Activated naive CD4-positive, alpha-beta T cell treated with anti-CD3 and anti-CD28 coated beads, Interleukin-2, amount 10 ng/mL, durations not matched to agents 7 days and 5 days (primary cell): ENCODE measurements at regions of chr7 and their contacts with region 1.

Region 1: GRCh38 chr7:20598459-20599309 is 16.8 kb upstream of the ABCB5 start:
- DNase-seq: no peak
- H3K4me3 Mint-ChIP-seq: no peak overlapping the region
- H3K27ac Mint-ChIP-seq: no peak overlapping the region
- H3K4me1 Mint-ChIP-seq: no peaks in the 10 kb centered on the region
- H3K27me3 Mint-ChIP-seq: peaks cover 4% of the 10 kb centered on the region

Region 2: DNA sequence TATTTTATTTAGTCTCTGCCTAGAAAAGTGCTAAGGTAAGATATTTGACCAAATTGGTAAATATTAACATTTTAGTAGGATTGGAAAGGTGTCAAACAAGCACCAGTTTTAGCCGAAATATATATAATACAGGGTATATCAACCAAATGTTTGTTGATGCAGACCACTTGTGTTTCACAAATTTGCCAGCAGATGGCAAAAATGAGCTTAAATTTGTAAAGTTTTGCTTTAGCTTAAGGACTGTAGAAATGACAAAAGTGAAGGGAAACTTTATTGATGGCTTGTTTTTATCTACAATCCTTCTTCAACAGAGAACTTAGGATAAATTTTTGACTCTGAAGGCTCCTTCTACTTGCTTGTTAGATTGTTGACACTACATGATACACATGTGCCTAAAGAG is 885.0 kb before region 1 on chr7:
- CTCF ChIA-PET with region 1: interaction called, 28 read pairs
- DNase-seq: peak; percentile 61
- H3K4me3 Mint-ChIP-seq: no peak overlapping the region
- H3K27ac Mint-ChIP-seq: no peak overlapping the region
- H3K4me1 Mint-ChIP-seq: peaks cover 11% of the 10 kb centered on the region
- H3K27me3 Mint-ChIP-seq: no peaks in the 10 kb centered on the region

Region 3: DNA sequence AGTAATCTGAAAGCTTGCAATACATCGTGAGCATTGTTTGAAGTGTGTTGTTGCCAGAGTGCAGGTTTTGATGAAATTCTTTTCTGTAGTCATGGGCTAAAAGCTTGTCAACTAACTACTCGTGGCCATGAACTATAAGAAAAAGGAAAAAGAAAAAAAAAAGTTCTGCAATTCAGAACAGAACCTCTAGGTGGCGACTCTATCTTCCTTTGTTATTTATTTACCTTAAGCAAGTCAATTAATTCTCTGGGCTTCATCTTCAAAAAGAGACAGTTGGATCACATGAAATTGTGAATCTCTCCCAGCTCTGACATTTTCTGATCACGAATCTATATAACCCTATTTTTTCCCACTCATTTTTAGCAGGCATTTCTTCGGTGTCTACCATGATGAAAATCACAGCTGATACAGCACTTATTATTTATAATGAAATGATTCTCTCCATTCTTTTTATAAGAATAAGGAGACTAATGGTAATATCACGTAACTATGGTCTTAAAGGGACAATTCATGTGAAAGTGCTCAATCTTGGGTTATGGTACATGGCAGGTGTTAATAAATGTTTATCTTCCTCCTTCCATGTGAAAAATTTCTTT is 844.1 kb before region 1 on chr7:
- CTCF ChIA-PET with region 1: interaction called, 16 read pairs
- DNase-seq: no peak
- H3K4me3 Mint-ChIP-seq: no peak overlapping the region
- H3K27ac Mint-ChIP-seq: no peak overlapping the region
- H3K4me1 Mint-ChIP-seq: no peaks in the 10 kb centered on the region
- H3K27me3 Mint-ChIP-seq: no peaks in the 10 kb centered on the region

Region 4: GRCh38 chr7:20560325-20561180 is 38.1 kb before region 1 on chr7:
- CTCF ChIA-PET with region 1: no interaction called
- DNase-seq: no peak
- H3K4me3 Mint-ChIP-seq: no peak overlapping the region
- H3K27ac Mint-ChIP-seq: no peak overlapping the region
- H3K4me1 Mint-ChIP-seq: no peaks in the 10 kb centered on the region
- H3K27me3 Mint-ChIP-seq: no peaks in the 10 kb centered on the region

Region 5: GRCh38 chr7:20700453-20701227 is 102.0 kb after region 1 on chr7:
- CTCF ChIA-PET with region 1: no interaction called
- DNase-seq: no peak
- H3K4me3 Mint-ChIP-seq: no peak overlapping the region
- H3K27ac Mint-ChIP-seq: no peak overlapping the region
- H3K4me1 Mint-ChIP-seq: no peaks in the 10 kb centered on the region
- H3K27me3 Mint-ChIP-seq: no peaks in the 10 kb centered on the region